Activated CD8-positive, alpha-beta T cell treated with anti-CD3 and anti-CD28 coated beads, Interleukin-2, amount 10 ng/mL, durations not matched to agents 7 days and 5 days (primary cell): ENCODE measurements at regions of chr18 and their contacts with region 1.

Region 1: DNA sequence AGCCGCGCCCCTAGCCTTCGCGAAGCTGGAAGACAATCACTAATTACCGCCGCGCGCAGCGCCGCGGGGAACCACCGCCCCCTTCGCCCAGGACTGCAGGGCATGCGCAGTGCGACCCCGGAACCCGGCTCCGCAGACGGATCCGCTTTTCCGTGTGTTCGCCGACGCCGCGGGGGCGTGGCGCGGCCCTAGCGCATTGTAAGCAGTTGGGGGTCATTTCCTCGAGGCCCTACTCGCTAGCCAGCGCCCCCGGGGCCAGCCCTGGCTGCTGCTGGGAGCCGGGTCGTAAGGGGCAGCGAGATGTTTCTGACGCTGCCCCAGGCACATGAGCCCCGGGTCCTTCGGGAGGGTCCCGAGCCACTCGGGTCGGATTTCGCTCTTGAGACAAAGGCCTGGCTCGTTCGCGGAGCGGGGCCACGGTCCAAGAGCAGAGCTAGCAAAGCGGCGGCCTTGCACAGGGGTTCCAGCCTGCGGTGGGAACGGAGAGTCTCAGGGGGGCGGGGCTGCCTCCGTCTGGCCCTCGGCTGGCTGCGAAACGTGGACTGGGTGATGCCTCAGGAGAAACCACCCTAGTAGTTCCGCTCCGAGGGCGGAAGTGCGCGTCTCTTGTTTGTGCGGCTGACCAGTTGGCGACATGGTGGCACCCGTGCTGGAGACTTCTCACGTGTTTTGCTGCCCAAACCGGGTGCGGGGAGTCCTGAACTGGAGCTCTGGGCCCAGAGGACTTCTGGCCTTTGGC is at the starts of genes ELP2 and SLC39A6:
- DNase-seq: peak; percentile 95
- ATAC-seq: peak; percentile 93
- H3K4me3 Mint-ChIP-seq: peak within 1 kb of the TSS; percentile 94
- H3K27ac Mint-ChIP-seq: peak within 1 kb of the TSS; percentile 95
- H3K4me1 Mint-ChIP-seq: peaks cover 44% of the 10 kb centered on the region
- H3K27me3 Mint-ChIP-seq: no peaks in the 10 kb centered on the region
- total RNA-seq, gene ELP2: 57.6 to 60.1 TPM
- total RNA-seq, gene SLC39A6: 19.4 to 19.7 TPM

Region 2: DNA sequence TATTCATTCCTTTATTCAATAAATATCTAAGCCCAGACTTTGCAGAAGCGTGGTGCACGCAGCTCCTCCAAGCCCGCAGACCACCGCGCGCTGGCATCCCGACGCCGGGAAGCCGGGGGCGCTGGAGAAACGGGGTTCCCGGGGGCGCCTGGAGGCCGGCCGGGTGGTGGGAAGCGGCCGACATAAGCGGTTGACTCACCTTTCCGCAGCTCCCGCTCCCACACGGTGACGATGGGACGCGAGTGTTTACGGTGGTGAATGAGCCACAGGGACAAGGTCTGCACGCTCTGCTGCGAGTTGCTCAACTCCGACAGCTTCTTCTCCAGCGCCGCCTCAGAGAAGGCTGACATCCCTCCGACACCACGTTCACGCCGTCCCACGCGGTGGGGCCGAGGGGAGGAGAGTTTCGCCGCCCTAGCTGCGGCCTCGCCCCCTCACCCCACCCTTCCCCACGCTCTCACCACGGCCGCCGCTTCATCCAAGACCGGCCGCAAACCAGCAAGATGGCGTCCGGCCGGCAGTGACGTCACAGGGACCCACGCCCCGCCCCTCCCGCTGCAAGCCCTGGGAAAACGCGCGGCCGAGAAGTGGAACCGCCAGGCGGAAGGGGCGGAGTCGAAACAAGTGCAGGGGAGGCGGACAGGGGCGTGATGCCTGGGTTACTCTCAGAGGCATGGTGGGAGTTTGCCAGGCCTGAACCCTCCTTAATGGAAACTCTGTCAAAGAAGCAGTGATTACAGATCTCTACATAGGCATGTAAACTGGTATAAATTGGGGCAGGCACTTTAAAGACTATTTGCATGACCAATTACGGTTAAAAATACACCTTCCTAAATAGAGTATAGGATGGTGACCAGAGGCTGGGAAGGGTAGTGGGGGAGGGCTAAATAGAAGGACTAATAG is 62.2 kb before region 1 on chr18 and contains the start of gene RPRD1A:
- CTCF ChIA-PET with region 1: no interaction called
- POLR2A ChIA-PET with region 1: interaction called, 10 read pairs
- DNase-seq: peak; percentile 97
- ATAC-seq: peak; percentile 96
- H3K4me3 Mint-ChIP-seq: peak within 1 kb of the TSS; percentile 95
- H3K27ac Mint-ChIP-seq: peak within 1 kb of the TSS; percentile 94
- H3K4me1 Mint-ChIP-seq: peaks cover 32% of the 10 kb centered on the region
- H3K27me3 Mint-ChIP-seq: peaks cover 3% of the 10 kb centered on the region
- total RNA-seq, gene RPRD1A: 26.8 to 28.2 TPM

Region 3: GRCh38 chr18:36296650-36297416 is 167.4 kb after region 1 on chr18:
- CTCF ChIA-PET with region 1: no interaction called
- POLR2A ChIA-PET with region 1: no interaction called
- DNase-seq: no peak
- ATAC-seq: peak; percentile 27
- H3K4me3 Mint-ChIP-seq: peak overlapping the region; percentile 16
- H3K27ac Mint-ChIP-seq: no peak overlapping the region
- H3K4me1 Mint-ChIP-seq: no peaks in the 10 kb centered on the region
- H3K27me3 Mint-ChIP-seq: peaks cover 21% of the 10 kb centered on the region